Calu3 (cell line): ENCODE measurements at regions of chr3 and their contacts with region 1.

Region 1: GRCh38 chr3:5304789-5305683 is 117.5 kb downstream of the EDEM1 start:
- DNase-seq: peak; percentile 74
- H3K4me3 Mint-ChIP-seq: no peak overlapping the region
- H3K27ac Mint-ChIP-seq: no peak overlapping the region
- H3K4me1 Mint-ChIP-seq: peaks cover 31% of the 10 kb centered on the region
- H3K27me3 Mint-ChIP-seq: no peaks in the 10 kb centered on the region
- CTCF ChIP-seq: peak; percentile 50

Region 2: DNA sequence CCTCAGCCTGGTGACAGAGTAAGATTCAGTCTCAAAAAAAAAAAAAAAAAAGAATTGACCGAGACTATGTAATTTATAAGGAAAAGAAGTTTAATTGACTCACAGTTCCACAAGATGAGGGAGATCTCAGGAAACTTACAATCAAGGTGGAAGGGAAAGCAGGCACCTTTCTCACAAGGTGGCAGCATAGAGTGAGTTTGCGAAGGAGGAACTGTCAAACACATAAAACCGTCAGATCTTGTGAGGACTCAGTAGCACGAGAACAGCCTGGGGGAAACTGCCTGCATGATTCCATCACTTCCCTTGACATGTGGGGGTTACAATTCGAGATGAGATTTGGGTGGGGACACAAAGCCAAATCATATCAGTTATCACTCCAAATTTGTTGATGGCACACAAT is 263.4 kb after region 1 on chr3:
- CTCF ChIA-PET with region 1: no interaction called
- intact Hi-C with region 1: loop called (anchors 2 kb)
- DNase-seq: peak; percentile 10
- H3K4me3 Mint-ChIP-seq: no peak overlapping the region
- H3K27ac Mint-ChIP-seq: no peak overlapping the region
- H3K4me1 Mint-ChIP-seq: no peaks in the 10 kb centered on the region
- H3K27me3 Mint-ChIP-seq: no peaks in the 10 kb centered on the region
- CTCF ChIP-seq: no peak

Region 3: DNA sequence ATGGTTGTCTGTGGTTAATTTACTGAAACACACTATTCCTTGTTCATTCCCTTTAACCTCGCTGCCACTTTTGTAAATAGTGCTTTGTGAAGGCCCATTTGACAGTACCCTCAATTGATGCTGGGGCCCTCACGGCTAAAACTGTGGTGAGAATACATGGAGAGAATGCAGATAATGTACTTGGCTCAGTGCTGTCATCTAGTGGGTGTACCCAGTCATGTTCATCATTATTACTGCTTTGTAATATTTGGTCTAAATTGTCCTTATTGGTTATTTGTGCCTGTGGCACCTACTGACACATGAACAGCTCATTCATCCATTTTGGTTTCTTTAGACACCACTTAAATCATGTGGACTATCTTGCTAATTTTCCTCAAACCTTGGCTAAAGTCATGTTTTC is 426.1 kb after region 1 on chr3:
- CTCF ChIA-PET with region 1: no interaction called
- intact Hi-C with region 1: loop called (anchors 5 kb)
- DNase-seq: no peak
- H3K4me3 Mint-ChIP-seq: no peak overlapping the region
- H3K27ac Mint-ChIP-seq: no peak overlapping the region
- H3K4me1 Mint-ChIP-seq: peaks cover 8% of the 10 kb centered on the region
- H3K27me3 Mint-ChIP-seq: no peaks in the 10 kb centered on the region
- CTCF ChIP-seq: no peak

Region 4: GRCh38 chr3:5799398-5799797 is 494.4 kb after region 1 on chr3:
- CTCF ChIA-PET with region 1: no interaction called
- intact Hi-C with region 1: loop called (anchors 2 kb)
- DNase-seq: no peak
- H3K4me3 Mint-ChIP-seq: no peak overlapping the region
- H3K27ac Mint-ChIP-seq: peak overlapping the region; percentile 76
- H3K4me1 Mint-ChIP-seq: no peaks in the 10 kb centered on the region
- H3K27me3 Mint-ChIP-seq: no peaks in the 10 kb centered on the region
- CTCF ChIP-seq: no peak